MCF 10A (cell line): ENCODE measurements at regions of chr2 and their contacts with region 1.

Region 1: DNA sequence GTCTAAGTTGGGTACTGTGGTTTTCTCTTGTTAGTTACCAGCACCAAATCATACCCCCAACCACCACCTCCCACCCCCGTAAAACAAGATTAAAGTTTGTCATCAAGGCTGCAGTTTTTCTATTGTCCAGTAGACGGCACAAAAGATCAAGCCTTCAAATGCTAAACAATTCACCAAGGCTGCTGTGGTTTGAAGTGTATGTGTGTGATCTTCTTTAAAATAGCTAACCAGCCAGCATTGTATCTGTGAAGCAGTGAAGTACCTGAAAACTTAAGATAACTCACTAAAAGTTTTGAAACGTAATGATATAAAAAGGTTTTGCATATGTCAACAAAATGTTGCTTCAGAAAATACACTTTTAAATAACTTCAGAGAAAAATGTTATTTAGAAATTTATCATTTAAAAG is 5.9 kb upstream of the MEIS1 start:
- DNase-seq: peak; percentile 71
- H3K4me3 Mint-ChIP-seq: no peak overlapping the region
- H3K27ac Mint-ChIP-seq: no peak overlapping the region
- H3K4me1 Mint-ChIP-seq: no peaks in the 10 kb centered on the region
- H3K27me3 Mint-ChIP-seq: peaks cover 11% of the 10 kb centered on the region
- CTCF ChIP-seq: peak; percentile 78

Region 2: GRCh38 chr2:65638443-65638842 is 790.6 kb before region 1 on chr2:
- CTCF ChIA-PET with region 1: interaction called, 8 read pairs
- POLR2A ChIA-PET with region 1: interaction called, 16 read pairs
- intact Hi-C with region 1: loop called (anchors 2 kb)
- DNase-seq: no peak
- H3K4me3 Mint-ChIP-seq: no peak overlapping the region
- H3K27ac Mint-ChIP-seq: no peak overlapping the region
- H3K4me1 Mint-ChIP-seq: peaks cover 28% of the 10 kb centered on the region
- H3K27me3 Mint-ChIP-seq: no peaks in the 10 kb centered on the region
- CTCF ChIP-seq: no peak

Region 3: GRCh38 chr2:66370849-66371248 is 58.2 kb before region 1 on chr2:
- CTCF ChIA-PET with region 1: no interaction called
- POLR2A ChIA-PET with region 1: no interaction called
- intact Hi-C with region 1: no loop called
- DNase-seq: no peak
- H3K4me3 Mint-ChIP-seq: no peak overlapping the region
- H3K27ac Mint-ChIP-seq: no peak overlapping the region
- H3K4me1 Mint-ChIP-seq: peaks cover 6% of the 10 kb centered on the region
- H3K27me3 Mint-ChIP-seq: no peaks in the 10 kb centered on the region
- CTCF ChIP-seq: no peak

Region 4: DNA sequence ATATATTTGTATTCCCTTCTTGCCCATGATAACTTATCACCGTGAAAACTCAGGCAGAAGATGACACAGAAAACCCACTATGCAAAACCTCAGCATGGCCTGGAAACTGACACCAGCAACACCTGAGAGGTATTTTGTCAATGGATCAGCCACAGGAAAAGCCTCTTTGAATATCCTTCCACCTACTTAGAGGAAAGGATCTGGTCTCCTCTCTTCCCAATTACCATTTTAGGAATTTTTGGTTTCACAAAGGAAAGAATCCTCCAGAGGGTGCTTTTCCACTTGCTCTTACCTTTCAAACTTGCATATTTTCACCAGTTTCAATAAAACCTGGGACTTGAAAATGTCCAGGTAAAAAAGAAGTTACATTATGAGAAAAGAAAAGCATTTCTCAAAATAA is 14.2 kb before region 1 on chr2:
- CTCF ChIA-PET with region 1: interaction called, 10 read pairs
- POLR2A ChIA-PET with region 1: interaction called, 4 read pairs
- intact Hi-C with region 1: no loop called
- DNase-seq: no peak
- H3K4me3 Mint-ChIP-seq: no peak overlapping the region
- H3K27ac Mint-ChIP-seq: no peak overlapping the region
- H3K4me1 Mint-ChIP-seq: no peaks in the 10 kb centered on the region
- H3K27me3 Mint-ChIP-seq: no peaks in the 10 kb centered on the region
- CTCF ChIP-seq: no peak

Region 5: DNA sequence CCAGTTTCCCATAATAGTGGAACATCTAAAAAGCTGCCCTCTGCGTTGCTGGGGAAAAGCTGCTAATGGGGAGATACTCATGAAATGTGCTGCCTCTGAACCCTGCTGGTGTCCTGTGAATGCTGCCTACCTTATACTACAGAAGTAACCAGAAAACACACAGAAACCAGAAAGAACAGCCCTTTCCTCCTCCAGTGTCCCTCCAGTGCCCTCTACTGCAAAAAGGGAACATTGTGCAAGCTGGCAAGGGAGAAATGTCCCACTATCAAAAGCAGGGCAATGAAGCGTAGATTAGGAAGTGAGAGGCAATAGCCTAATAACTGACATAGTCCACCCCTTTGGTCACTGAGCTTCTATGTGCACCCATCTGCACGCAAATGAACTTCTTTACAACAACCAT is 805.4 kb after region 1 on chr2:
- CTCF ChIA-PET with region 1: interaction called, 4 read pairs
- POLR2A ChIA-PET with region 1: interaction called, 6 read pairs
- intact Hi-C with region 1: loop called (anchors 5 kb)
- DNase-seq: peak; percentile 16
- H3K4me3 Mint-ChIP-seq: no peak overlapping the region
- H3K27ac Mint-ChIP-seq: no peak overlapping the region
- H3K4me1 Mint-ChIP-seq: no peaks in the 10 kb centered on the region
- H3K27me3 Mint-ChIP-seq: no peaks in the 10 kb centered on the region
- CTCF ChIP-seq: peak; percentile 38

Region 6: DNA sequence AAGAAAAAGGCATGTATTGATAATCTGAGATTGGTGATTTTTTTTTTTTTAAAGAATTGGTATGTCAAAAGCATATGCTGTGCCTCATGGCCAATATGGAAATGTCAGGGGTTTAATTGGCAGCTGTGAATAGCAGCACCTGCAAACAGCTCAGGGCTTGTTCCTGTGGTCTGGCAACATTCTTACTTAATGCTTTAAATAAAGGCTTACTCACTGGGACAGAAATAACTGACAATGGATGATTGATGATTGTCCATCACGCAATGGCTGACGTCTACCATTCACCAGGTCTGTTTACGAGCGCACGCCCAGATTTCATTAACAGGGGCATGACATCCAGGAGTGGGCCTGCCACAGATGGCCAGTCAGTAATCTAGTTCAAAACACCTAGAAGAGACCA is 1034.7 kb after region 1 on chr2:
- CTCF ChIA-PET with region 1: no interaction called
- POLR2A ChIA-PET with region 1: interaction called, 8 read pairs
- intact Hi-C with region 1: loop called (anchors 5 kb)
- DNase-seq: peak; percentile 97
- H3K4me3 Mint-ChIP-seq: peak overlapping the region; percentile 28
- H3K27ac Mint-ChIP-seq: peak overlapping the region; percentile 92
- H3K4me1 Mint-ChIP-seq: peaks cover 37% of the 10 kb centered on the region
- H3K27me3 Mint-ChIP-seq: no peaks in the 10 kb centered on the region
- CTCF ChIP-seq: no peak